Caco-2 (cell line): ENCODE measurements at regions of chr3 and their contacts with region 1.

Region 1: GRCh38 chr3:45210308-45211041 is 15.6 kb downstream of the TMEM158 start:
- DNase-seq: peak; percentile 82 to 86
- H3K4me3 ChIP-seq: no peak overlapping the region
- H3K4me3 Mint-ChIP-seq: peak overlapping the region; percentile 22
- H3K27ac Mint-ChIP-seq: no peak overlapping the region
- H3K4me1 ChIP-seq: peaks cover 16% of the 10 kb centered on the region
- H3K4me1 Mint-ChIP-seq: peaks cover 16% of the 10 kb centered on the region
- H3K27me3 ChIP-seq: no peaks in the 10 kb centered on the region
- H3K27me3 Mint-ChIP-seq: no peaks in the 10 kb centered on the region
- CTCF ChIP-seq: peak; percentile 74 to 93

Region 2: GRCh38 chr3:45037734-45038455 is 172.6 kb before region 1 on chr3:
- CTCF ChIA-PET with region 1: interaction called, 66 read pairs
- POLR2A ChIA-PET with region 1: interaction called, 4 read pairs
- intact Hi-C with region 1: loop called (anchors 1 kb)
- DNase-seq: peak; percentile 91
- H3K4me3 ChIP-seq: no peak overlapping the region
- H3K4me3 Mint-ChIP-seq: peak overlapping the region; percentile 58
- H3K27ac Mint-ChIP-seq: no peak overlapping the region
- H3K4me1 ChIP-seq: no peaks in the 10 kb centered on the region
- H3K4me1 Mint-ChIP-seq: no peaks in the 10 kb centered on the region
- H3K27me3 ChIP-seq: no peaks in the 10 kb centered on the region
- H3K27me3 Mint-ChIP-seq: peaks cover 6% of the 10 kb centered on the region
- CTCF ChIP-seq: peak; percentile 90 to 95

Region 3: GRCh38 chr3:45043728-45044299 is 166.7 kb before region 1 on chr3:
- CTCF ChIA-PET with region 1: interaction called, 66 read pairs
- POLR2A ChIA-PET with region 1: interaction called, 4 read pairs
- intact Hi-C with region 1: loop called (anchors 1 kb)
- DNase-seq: no peak
- H3K4me3 ChIP-seq: no peak overlapping the region
- H3K4me3 Mint-ChIP-seq: no peak overlapping the region
- H3K27ac Mint-ChIP-seq: no peak overlapping the region
- H3K4me1 ChIP-seq: no peaks in the 10 kb centered on the region
- H3K4me1 Mint-ChIP-seq: peaks cover 6% of the 10 kb centered on the region
- H3K27me3 ChIP-seq: no peaks in the 10 kb centered on the region
- H3K27me3 Mint-ChIP-seq: peaks cover 4% of the 10 kb centered on the region
- CTCF ChIP-seq: no peak

Region 4: DNA sequence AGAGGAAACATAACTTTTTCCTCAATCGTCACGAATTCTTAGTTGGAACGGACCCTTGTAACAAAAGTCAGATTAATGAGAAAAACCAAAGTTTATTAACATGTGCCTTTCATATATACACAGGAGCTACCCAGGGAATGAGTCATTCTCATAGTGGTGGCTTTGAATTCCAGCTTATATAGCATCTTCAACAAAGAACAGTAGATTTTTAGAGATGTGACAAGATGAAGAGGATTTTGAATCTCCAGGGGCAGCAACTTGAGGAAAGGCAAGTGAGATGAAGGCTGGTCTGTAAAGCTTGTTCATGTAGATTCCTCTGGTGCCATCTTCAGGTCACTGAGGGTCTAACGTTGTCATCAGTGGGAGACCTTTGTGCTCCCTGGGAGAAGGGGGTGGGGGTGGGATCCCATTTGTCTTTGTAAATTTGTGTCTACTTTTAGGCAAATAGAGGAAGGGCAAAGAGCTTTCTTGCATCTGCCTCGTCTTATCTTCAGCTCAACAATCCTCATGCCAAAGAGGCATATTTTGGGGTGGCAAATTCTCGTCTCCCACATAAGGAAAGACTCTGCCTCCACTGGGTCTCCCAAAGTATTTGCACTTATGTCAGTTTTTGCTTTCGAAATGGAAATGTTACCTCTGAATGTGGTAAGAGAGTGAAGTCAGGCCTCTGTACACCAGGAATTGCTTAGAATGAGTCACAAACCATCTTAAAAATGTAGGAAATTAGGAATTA is 154.9 kb before region 1 on chr3:
- CTCF ChIA-PET with region 1: interaction called, 9 read pairs
- POLR2A ChIA-PET with region 1: no interaction called
- intact Hi-C with region 1: loop called (anchors 5 kb)
- DNase-seq: peak; percentile 56 to 59
- H3K4me3 ChIP-seq: no peak overlapping the region
- H3K4me3 Mint-ChIP-seq: no peak overlapping the region
- H3K27ac Mint-ChIP-seq: no peak overlapping the region
- H3K4me1 ChIP-seq: peaks cover 9% of the 10 kb centered on the region; the same call in 1 of the 2 replicates
- H3K4me1 Mint-ChIP-seq: no peaks in the 10 kb centered on the region
- H3K27me3 ChIP-seq: no peaks in the 10 kb centered on the region
- H3K27me3 Mint-ChIP-seq: no peaks in the 10 kb centered on the region
- CTCF ChIP-seq: peak; percentile 40 to 48

Region 5: GRCh38 chr3:45078910-45079522 is 131.5 kb before region 1 on chr3:
- CTCF ChIA-PET with region 1: interaction called, 12 read pairs
- POLR2A ChIA-PET with region 1: no interaction called
- intact Hi-C with region 1: no loop called
- DNase-seq: peak in 1 of 2 experiments; percentile 16
- H3K4me3 ChIP-seq: no peak overlapping the region
- H3K4me3 Mint-ChIP-seq: no peak overlapping the region
- H3K27ac Mint-ChIP-seq: no peak overlapping the region
- H3K4me1 ChIP-seq: no peaks in the 10 kb centered on the region
- H3K4me1 Mint-ChIP-seq: peaks cover 6% of the 10 kb centered on the region
- H3K27me3 ChIP-seq: no peaks in the 10 kb centered on the region
- H3K27me3 Mint-ChIP-seq: peaks cover 3% of the 10 kb centered on the region
- CTCF ChIP-seq: no peak

Region 6: DNA sequence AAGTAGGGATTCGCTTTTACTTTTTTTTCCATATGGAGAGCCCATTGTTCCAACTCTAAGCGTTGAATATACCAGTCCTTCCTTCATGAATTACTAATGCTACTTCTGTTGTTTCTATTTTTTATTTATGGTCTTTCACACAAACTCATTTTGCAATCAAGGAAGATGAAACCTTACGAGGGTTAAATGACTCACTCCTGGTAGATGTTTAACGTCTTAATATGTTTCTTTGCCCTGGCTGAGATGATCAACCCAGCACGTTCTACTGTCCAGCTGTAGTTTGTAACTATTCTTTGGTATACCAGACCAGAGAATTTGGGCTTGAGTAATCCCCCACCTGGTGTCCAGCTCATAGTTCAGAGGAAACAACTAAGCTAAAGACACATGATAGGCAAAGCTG is 87.4 kb before region 1 on chr3:
- CTCF ChIA-PET with region 1: interaction called, 14 read pairs
- POLR2A ChIA-PET with region 1: no interaction called
- intact Hi-C with region 1: no loop called
- DNase-seq: no peak
- H3K4me3 ChIP-seq: no peak overlapping the region
- H3K4me3 Mint-ChIP-seq: no peak overlapping the region
- H3K27ac Mint-ChIP-seq: no peak overlapping the region
- H3K4me1 ChIP-seq: peaks cover 58% of the 10 kb centered on the region
- H3K4me1 Mint-ChIP-seq: peaks cover 59% of the 10 kb centered on the region
- H3K27me3 ChIP-seq: no peaks in the 10 kb centered on the region
- H3K27me3 Mint-ChIP-seq: no peaks in the 10 kb centered on the region
- CTCF ChIP-seq: no peak

Region 7: GRCh38 chr3:45167011-45167911 is 43.2 kb before region 1 on chr3:
- CTCF ChIA-PET with region 1: no interaction called
- POLR2A ChIA-PET with region 1: no interaction called
- intact Hi-C with region 1: loop called (anchors 2 kb)
- DNase-seq: peak; percentile 85 to 88
- H3K4me3 ChIP-seq: 0 out of 2 replicates have a peak overlapping the region, but pooled peaks have one; percentile 4
- H3K4me3 Mint-ChIP-seq: peak overlapping the region; percentile 58
- H3K27ac Mint-ChIP-seq: peak overlapping the region; percentile 86
- H3K4me1 ChIP-seq: no peaks in the 10 kb centered on the region; the same call in 1 of the 2 replicates
- H3K4me1 Mint-ChIP-seq: peaks cover 11% of the 10 kb centered on the region
- H3K27me3 ChIP-seq: no peaks in the 10 kb centered on the region
- H3K27me3 Mint-ChIP-seq: no peaks in the 10 kb centered on the region
- CTCF ChIP-seq: no peak

Region 8: GRCh38 chr3:45367453-45367871 is 157.0 kb after region 1 on chr3:
- CTCF ChIA-PET with region 1: no interaction called
- POLR2A ChIA-PET with region 1: no interaction called
- intact Hi-C with region 1: no loop called
- DNase-seq: no peak
- H3K4me3 ChIP-seq: no peak overlapping the region
- H3K4me3 Mint-ChIP-seq: no peak overlapping the region
- H3K27ac Mint-ChIP-seq: no peak overlapping the region
- H3K4me1 ChIP-seq: no peaks in the 10 kb centered on the region
- H3K4me1 Mint-ChIP-seq: no peaks in the 10 kb centered on the region
- H3K27me3 ChIP-seq: no peaks in the 10 kb centered on the region
- H3K27me3 Mint-ChIP-seq: no peaks in the 10 kb centered on the region
- CTCF ChIP-seq: no peak